ENCODE measurements at regions of chr10 and their contacts with region 1.

Region 1: DNA sequence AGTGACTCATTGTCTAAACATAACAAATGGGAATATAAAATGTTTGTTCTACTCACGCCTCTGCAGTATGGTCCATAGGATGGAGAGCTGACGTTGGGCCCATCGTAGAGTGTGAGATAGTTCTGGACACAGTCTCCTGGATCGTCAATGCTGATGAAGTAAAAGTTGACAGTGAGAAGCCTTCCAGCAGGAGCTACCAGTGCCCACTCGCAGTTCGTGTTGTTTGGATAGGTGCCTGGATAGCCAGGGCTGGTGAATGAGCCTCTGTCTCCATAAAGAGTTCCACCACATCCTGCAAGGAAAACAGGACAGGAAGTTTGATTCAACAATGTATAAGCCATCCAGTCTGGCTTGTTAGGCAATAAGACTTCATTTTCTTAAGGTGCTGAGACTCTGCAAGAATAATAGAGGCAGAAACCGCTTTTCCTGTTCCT is 79.6 kb downstream of the OR13A1 start:
- DNase-seq: no peak
- ATAC-seq: no peak
- H3K4me3 ChIP-seq: no peak overlapping the region
- H3K27ac ChIP-seq: no peak overlapping the region
- H3K4me1 ChIP-seq: no peaks in the 10 kb centered on the region
- H3K27me3 ChIP-seq: no peaks in the 10 kb centered on the region; a peak in 1 of 4 replicates
- CTCF ChIP-seq: no peak
- EP300 ChIP-seq: no peak
- POLR2A ChIP-seq: no peak
- RAD21 ChIP-seq: no peak

Region 2: DNA sequence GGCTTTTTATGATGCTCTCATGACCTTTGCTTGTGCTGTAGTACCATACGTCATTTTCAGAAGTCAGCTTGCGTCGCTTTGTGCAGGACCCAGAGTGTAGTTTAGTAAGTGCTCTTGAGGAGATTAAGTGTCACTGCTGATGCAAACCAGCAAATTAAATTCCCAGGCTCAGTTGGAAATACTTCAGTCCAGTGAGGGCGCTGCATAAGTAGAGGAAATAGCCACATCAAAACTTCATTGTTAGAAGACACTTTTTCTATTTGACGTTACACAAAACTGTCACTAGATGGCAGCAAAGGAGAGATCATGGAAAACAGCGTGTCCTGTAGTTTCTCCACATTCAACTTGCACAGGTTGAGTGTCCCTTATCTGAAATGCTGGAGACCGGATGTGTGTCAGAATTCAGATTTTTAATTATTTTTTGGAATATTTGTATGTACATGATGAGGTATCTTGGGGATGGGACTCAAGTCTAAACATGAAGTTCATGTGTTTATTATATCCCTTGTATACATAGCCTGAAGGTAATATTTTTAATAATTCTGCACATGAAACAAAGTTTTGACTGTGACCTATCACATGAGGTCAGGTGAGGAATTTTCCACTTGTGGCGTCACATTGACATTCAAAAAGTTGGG is 227.2 kb before region 1 on chr10:
- CTCF ChIA-PET with region 1: interaction called, 8 read pairs
- POLR2A ChIA-PET with region 1: no interaction called
- RAD21 ChIA-PET with region 1: interaction called, 3 read pairs
- SMC1A ChIA-PET with region 1: interaction called, 6 read pairs
- in situ Hi-C with region 1: no loop called
- intact Hi-C with region 1: loop called (anchors 2 kb)
- DNase-seq: peak; percentile 35
- ATAC-seq: peak; percentile 94
- H3K4me3 ChIP-seq: no peak overlapping the region
- H3K27ac ChIP-seq: no peak overlapping the region
- H3K4me1 ChIP-seq: no peaks in the 10 kb centered on the region
- H3K27me3 ChIP-seq: no peaks in the 10 kb centered on the region
- CTCF ChIP-seq: peak; percentile 65 to 83 (median 80)
- EP300 ChIP-seq: no peak
- POLR2A ChIP-seq: no peak
- RAD21 ChIP-seq: peak; percentile 78

Region 3: DNA sequence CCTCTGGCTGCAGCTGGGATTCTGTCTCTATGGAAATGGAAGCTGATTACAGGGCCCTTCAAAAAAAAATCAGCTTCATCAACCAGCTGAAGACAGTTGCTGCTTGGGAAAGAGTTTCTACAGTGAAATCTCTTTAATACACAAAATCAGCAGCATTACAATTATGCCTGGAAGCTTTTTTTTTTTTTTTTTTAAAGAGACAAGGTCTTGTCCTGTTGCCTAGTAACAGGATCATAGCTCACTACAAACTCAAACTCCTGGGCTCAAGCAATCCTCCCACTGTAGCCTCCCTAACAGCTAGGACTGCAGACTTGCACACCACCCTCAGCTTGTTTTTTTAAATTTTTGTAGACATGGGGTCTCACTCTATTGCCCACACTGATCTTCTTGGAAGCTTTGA is 14.9 kb before region 1 on chr10:
- CTCF ChIA-PET with region 1: interaction called, 23 read pairs
- POLR2A ChIA-PET with region 1: interaction called, 4 read pairs
- RAD21 ChIA-PET with region 1: no interaction called
- SMC1A ChIA-PET with region 1: interaction called, 10 read pairs
- in situ Hi-C with region 1: no loop called
- intact Hi-C with region 1: no loop called
- DNase-seq: no peak
- ATAC-seq: no peak
- H3K4me3 ChIP-seq: no peak overlapping the region
- H3K27ac ChIP-seq: no peak overlapping the region
- H3K4me1 ChIP-seq: no peaks in the 10 kb centered on the region
- H3K27me3 ChIP-seq: no peaks in the 10 kb centered on the region; a peak in 1 of 4 replicates
- CTCF ChIP-seq: no peak
- EP300 ChIP-seq: no peak
- POLR2A ChIP-seq: no peak
- RAD21 ChIP-seq: no peak

Region 4: DNA sequence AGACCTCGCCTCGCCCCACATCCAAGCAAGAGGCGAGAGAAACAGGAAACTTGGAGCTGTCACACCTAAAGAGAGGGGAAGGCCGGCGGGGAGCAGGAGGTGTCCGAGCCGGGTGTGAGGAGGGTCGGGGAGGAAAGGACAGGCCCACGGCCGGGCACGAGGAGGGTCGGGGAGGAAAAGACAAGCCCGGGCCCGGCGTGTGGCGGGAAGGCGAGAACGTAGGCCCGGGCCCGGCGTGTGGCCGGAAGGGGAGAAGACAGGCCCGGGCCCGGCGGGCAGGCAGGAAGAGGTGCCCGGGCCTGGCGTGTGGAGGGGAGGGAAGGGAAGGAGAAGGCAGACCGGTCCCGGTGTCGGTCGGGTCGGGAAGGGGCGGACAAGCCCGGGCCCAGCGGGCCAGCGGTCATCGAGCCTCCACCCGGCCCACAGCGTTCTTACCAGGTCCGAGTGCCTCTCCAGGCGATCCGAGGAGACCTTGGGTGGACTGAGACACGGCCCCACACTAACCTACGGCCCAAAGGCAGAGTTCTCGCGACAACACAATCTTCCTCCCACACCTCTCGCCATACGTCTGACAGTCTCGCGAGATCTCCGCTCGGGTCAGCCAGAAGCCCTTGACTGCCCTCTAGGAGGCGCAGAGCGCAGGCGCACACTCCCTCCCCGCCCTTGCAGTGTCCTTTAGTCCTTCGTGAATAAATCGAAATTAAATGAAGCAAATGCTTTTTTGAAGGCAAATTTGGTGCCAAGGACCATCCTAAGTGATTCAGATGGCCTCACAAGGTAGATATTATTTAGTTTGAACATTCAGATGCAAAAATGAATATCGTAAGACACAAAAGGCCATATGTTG is 794.5 kb after region 1 on chr10 and contains the start of gene NCOA4:
- CTCF ChIA-PET with region 1: interaction called, 9 read pairs
- POLR2A ChIA-PET with region 1: no interaction called
- RAD21 ChIA-PET with region 1: interaction called, 4 read pairs
- SMC1A ChIA-PET with region 1: interaction called, 6 read pairs
- in situ Hi-C with region 1: loop called (anchors 5 kb)
- intact Hi-C with region 1: loop called (anchors 2 kb)
- DNase-seq: peak; percentile 95
- ATAC-seq: peak; percentile 97
- H3K4me3 ChIP-seq: peak within 1 kb of the TSS; percentile 73
- H3K27ac ChIP-seq: peak within 1 kb of the TSS; percentile 80
- H3K4me1 ChIP-seq: no peaks in the 10 kb centered on the region; the same call in none of the 2 replicates
- H3K27me3 ChIP-seq: no peaks in the 10 kb centered on the region
- CTCF ChIP-seq: peak; percentile 82 to 90 (median 86)
- EP300 ChIP-seq: no peak
- POLR2A ChIP-seq: peak; percentile 96
- RAD21 ChIP-seq: peak; percentile 30; the same call in 1 of the 2 replicates
- polyA plus RNA-seq, gene NCOA4: 57.5 to 62.6 TPM

Region 5: DNA sequence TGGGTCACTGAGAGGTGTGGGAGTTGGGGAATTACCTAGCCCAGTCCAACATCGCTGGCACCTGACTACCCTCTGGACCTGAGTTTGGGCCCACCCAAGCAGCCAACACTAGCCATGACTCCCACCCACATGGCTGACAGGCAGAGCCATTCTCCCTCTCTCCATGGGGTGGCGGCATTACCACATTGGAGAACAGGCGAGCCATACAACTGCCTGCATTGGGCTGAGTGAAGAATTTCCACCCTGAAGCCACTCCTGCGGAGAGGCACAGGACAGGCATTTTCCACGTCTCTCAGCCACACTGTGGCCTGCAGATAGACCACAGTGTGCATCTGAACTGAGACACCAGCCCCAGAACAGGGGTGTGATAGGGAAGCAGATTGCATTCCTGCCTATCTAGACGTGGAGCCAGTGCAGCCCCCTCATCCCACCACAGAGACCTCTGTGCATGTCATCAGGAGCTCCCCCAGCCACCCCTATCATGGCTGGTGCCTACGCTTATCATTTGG is 992.8 kb after region 1 on chr10:
- CTCF ChIA-PET with region 1: no interaction called
- POLR2A ChIA-PET with region 1: no interaction called
- RAD21 ChIA-PET with region 1: no interaction called
- SMC1A ChIA-PET with region 1: no interaction called
- in situ Hi-C with region 1: no loop called
- intact Hi-C with region 1: loop called (anchors 10 kb)
- DNase-seq: no peak
- ATAC-seq: peak; percentile 97
- H3K4me3 ChIP-seq: no peak overlapping the region
- H3K27ac ChIP-seq: no peak overlapping the region
- H3K4me1 ChIP-seq: no peaks in the 10 kb centered on the region
- H3K27me3 ChIP-seq: no peaks in the 10 kb centered on the region
- CTCF ChIP-seq: peak; percentile 84 to 89 (median 87)
- EP300 ChIP-seq: no peak
- POLR2A ChIP-seq: no peak
- RAD21 ChIP-seq: peak; percentile 89

Region 6: GRCh38 chr10:46255801-46256747 is 1020.3 kb after region 1 on chr10:
- CTCF ChIA-PET with region 1: no interaction called
- POLR2A ChIA-PET with region 1: no interaction called
- RAD21 ChIA-PET with region 1: no interaction called
- SMC1A ChIA-PET with region 1: interaction called, 3 read pairs
- in situ Hi-C with region 1: no loop called
- intact Hi-C with region 1: loop called (anchors 10 kb)
- DNase-seq: no peak
- ATAC-seq: peak; percentile 83
- H3K4me3 ChIP-seq: no peak overlapping the region
- H3K27ac ChIP-seq: no peak overlapping the region
- H3K4me1 ChIP-seq: no peaks in the 10 kb centered on the region
- H3K27me3 ChIP-seq: no peaks in the 10 kb centered on the region
- CTCF ChIP-seq: peak; percentile 47 to 70 (median 58); a peak in 5 of 6 replicates
- EP300 ChIP-seq: no peak
- POLR2A ChIP-seq: no peak
- RAD21 ChIP-seq: peak; percentile 41; the same call in 1 of the 2 replicates

Measured in GM12878 (cell line).